Panc1 (cell line): ENCODE measurements at regions of chr9 and their contacts with region 1.

Region 1: GRCh38 chr9:128455849-128456612 is at the start of gene ODF2:
- DNase-seq: peak; percentile 47
- ATAC-seq: peak; percentile 92
- H3K4me3 ChIP-seq: peak within 1 kb of the TSS; percentile 72 to 76
- H3K27ac ChIP-seq: peak within 1 kb of the TSS; percentile 69; the same call in 1 of the 2 replicates
- H3K4me1 ChIP-seq: peaks cover 5% of the 10 kb centered on the region; the same call in 1 of the 2 replicates
- H3K27me3 ChIP-seq: no peaks in the 10 kb centered on the region
- CTCF ChIP-seq: no peak
- total RNA-seq, gene ODF2: 36.8 TPM

Region 2: GRCh38 chr9:128396970-128397613 is 58.9 kb before region 1 on chr9:
- CTCF ChIA-PET with region 1: no interaction called
- POLR2A ChIA-PET with region 1: no interaction called
- in situ Hi-C with region 1: no loop called
- intact Hi-C with region 1: no loop called
- DNase-seq: no peak
- ATAC-seq: peak; percentile 53; the same call in 1 of the 2 replicates
- H3K4me3 ChIP-seq: no peak overlapping the region
- H3K27ac ChIP-seq: no peak overlapping the region
- H3K4me1 ChIP-seq: no peaks in the 10 kb centered on the region
- H3K27me3 ChIP-seq: no peaks in the 10 kb centered on the region
- CTCF ChIP-seq: no peak

Region 3: GRCh38 chr9:128420060-128420650 is 35.9 kb before region 1 on chr9:
- CTCF ChIA-PET with region 1: interaction called, 3 read pairs
- POLR2A ChIA-PET with region 1: interaction called, 17 read pairs
- in situ Hi-C with region 1: no loop called
- intact Hi-C with region 1: no loop called
- DNase-seq: no peak
- ATAC-seq: peak; percentile 91
- H3K4me3 ChIP-seq: peak overlapping the region; percentile 64 to 65
- H3K27ac ChIP-seq: peak overlapping the region; percentile 29; the same call in 1 of the 2 replicates
- H3K4me1 ChIP-seq: peaks cover 4% of the 10 kb centered on the region
- H3K27me3 ChIP-seq: no peaks in the 10 kb centered on the region
- CTCF ChIP-seq: peak; percentile 91

Region 4: DNA sequence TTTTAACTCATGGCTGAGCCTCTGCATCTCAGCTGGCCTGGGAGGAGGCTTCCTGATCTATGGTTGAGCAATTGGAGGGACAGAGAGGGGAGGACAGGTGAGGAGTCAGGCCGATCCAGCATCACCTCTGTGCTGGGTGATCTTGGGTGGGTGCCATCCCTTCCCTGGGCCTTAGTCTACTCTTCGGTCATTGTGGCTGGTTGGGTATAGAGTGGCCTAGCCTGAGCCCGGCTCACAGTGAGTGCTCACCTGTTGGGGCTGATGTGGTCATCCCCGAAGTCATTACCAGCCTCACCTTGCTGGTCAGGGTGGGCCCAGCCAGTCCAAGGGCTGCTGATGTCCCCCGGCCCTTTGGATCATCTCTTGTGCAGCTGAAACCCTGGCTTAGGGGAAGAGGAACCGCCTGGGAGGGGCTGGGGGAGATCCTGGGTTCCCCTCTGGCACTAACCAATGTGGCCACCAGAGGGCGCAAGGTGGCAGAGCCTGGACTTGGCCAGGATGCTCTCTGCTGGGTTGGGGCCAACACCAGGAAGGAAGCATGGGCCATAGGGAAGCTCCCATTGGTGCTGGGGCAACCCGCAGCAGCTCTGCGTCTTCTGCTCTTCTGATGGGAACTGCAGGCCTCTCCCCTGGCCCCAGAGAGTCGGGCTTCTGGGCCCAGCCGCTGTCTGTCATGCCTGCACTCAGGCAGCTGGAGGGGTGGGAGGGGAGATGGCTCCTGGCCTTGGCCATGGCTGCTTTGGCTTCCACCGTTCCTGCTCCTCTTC is 17.5 kb before region 1 on chr9:
- CTCF ChIA-PET with region 1: interaction called, 10 read pairs
- POLR2A ChIA-PET with region 1: no interaction called
- in situ Hi-C with region 1: no loop called
- intact Hi-C with region 1: no loop called
- DNase-seq: no peak
- ATAC-seq: peak; percentile 94
- H3K4me3 ChIP-seq: no peak overlapping the region
- H3K27ac ChIP-seq: no peak overlapping the region
- H3K4me1 ChIP-seq: no peaks in the 10 kb centered on the region
- H3K27me3 ChIP-seq: no peaks in the 10 kb centered on the region
- CTCF ChIP-seq: peak; percentile 92